ENCODE measurements at regions of chr9 and their contacts with region 1.

Region 1: GRCh38 chr9:104927912-104928740 is at the start of gene ABCA1:
- DNase-seq: peak; percentile 78
- ATAC-seq: peak; percentile 60
- H3K4me3 Mint-ChIP-seq: peak within 1 kb of the TSS; percentile 70
- H3K27ac Mint-ChIP-seq: no peak within 1 kb of the TSS
- H3K4me1 Mint-ChIP-seq: peaks cover 11% of the 10 kb centered on the region
- H3K27me3 Mint-ChIP-seq: peaks cover 36% of the 10 kb centered on the region
- total RNA-seq, gene ABCA1: 0.09 to 0.23 TPM

Region 2: DNA sequence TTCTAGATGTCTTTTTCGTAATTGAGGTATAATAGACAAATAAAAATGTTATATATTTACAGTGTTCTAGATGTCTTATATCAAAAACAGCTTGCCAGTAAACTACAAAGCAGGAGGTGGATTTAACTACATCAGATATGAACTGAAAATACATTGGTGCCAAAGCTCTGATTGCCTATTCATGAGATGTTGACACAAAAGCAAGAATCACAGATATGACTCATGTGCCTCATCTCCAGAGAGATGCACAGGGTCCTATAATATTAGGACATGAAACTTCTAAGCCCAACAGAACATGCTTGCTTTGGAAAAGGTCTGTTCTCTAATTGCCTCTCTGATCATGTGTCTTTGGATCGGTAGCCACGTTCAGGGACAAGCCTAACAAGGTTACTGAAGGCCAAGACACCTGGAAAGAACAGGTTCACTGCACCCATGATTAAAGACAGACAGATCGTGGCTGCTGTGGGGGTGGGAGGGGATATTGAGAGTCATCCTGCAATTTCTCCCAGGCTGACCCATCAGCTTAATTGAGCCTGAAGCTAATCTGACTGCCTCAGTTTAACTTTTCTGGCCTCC is 17.0 kb before region 1 on chr9:
- CTCF ChIA-PET with region 1: no interaction called
- DNase-seq: no peak
- ATAC-seq: no peak
- H3K4me3 Mint-ChIP-seq: no peak overlapping the region
- H3K27ac Mint-ChIP-seq: no peak overlapping the region
- H3K4me1 Mint-ChIP-seq: peaks cover 1% of the 10 kb centered on the region
- H3K27me3 Mint-ChIP-seq: peaks cover 10% of the 10 kb centered on the region

Region 3: GRCh38 chr9:104968025-104968982 is 40.2 kb after region 1 on chr9:
- CTCF ChIA-PET with region 1: interaction called, 11 read pairs
- DNase-seq: peak; percentile 88
- ATAC-seq: peak; percentile 100
- H3K4me3 Mint-ChIP-seq: peak overlapping the region; percentile 82
- H3K27ac Mint-ChIP-seq: peak overlapping the region; percentile 84
- H3K4me1 Mint-ChIP-seq: peaks cover 9% of the 10 kb centered on the region
- H3K27me3 Mint-ChIP-seq: peaks cover 33% of the 10 kb centered on the region